Activated CD4-positive, alpha-beta memory T cell treated with anti-CD3 and anti-CD28 coated beads for 36 hours (primary cell): ENCODE measurements at regions of chr11 and their contacts with region 1.

Region 1: GRCh38 chr11:57277845-57278709 is 41.0 kb upstream of the APLNR start:
- DNase-seq: peak; percentile 58
- H3K4me3 Mint-ChIP-seq: no peak overlapping the region
- H3K27ac Mint-ChIP-seq: no peak overlapping the region
- H3K4me1 Mint-ChIP-seq: peaks cover 2% of the 10 kb centered on the region
- H3K27me3 Mint-ChIP-seq: peaks cover 18% of the 10 kb centered on the region

Region 2: DNA sequence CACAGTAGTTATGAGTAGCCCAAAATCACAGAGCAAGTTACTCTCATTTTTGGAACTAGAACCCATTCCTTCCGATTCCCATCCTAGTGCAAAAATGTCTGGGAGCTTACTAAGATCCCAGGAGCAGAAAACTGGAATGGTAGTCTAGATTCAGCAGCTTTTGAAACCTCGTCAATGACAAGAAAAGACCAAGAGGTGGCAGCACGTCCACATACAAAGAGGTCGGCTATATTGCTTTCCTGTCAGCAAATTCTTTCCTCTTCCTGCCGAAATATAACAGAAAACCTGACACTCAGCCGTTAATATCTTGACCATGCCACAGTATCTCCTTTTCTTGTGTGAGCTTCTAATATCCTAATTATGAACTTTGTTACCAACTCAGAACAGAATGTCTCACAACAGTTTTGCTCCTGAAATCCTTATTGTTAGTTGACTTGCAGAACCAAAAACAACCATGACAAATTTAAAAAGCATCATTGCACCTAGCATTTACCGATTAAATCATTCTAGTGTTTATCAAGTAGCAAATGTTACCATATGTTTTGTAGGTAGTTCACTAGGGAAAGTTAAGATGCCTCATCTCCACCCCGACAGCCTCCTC is 436.8 kb before region 1 on chr11:
- CTCF ChIA-PET with region 1: interaction called, 12 read pairs
- POLR2A ChIA-PET with region 1: no interaction called
- intact Hi-C with region 1: no loop called
- DNase-seq: peak; percentile 39
- H3K4me3 Mint-ChIP-seq: no peak overlapping the region
- H3K27ac Mint-ChIP-seq: no peak overlapping the region
- H3K4me1 Mint-ChIP-seq: peaks cover 2% of the 10 kb centered on the region
- H3K27me3 Mint-ChIP-seq: peaks cover 4% of the 10 kb centered on the region